Posterior cingulate gyrus (tissue), 11 donors: ENCODE measurements at regions of chr4 and their contacts with region 1.

Region 1: GRCh38 chr4:25441519-25442117 is 64.6 kb downstream of the ANAPC4 start:
- DNase-seq: peak in 9 of 10 donors; percentile 30 to 90 (median 63)

Region 2: GRCh38 chr4:25767877-25768725 is 326.5 kb after region 1 on chr4:
- intact Hi-C with region 1: loop called (anchors 1 kb)
- DNase-seq: peak; percentile 43 to 95 (median 72)